AG04449 (cell line): ENCODE measurements at regions of chr12 and their contacts with region 1.

Region 1: GRCh38 chr12:106223485-106224354 is 24.1 kb downstream of the CKAP4 start:
- DNase-seq: no peak
- H3K4me3 ChIP-seq: no peak overlapping the region
- CTCF ChIP-seq: peak; percentile 93

Region 2: GRCh38 chr12:105420659-105421240 is 803.0 kb before region 1 on chr12:
- CTCF ChIA-PET with region 1: interaction called, 31 read pairs
- POLR2A ChIA-PET with region 1: no interaction called
- DNase-seq: peak; percentile 33
- H3K4me3 ChIP-seq: no peak overlapping the region
- CTCF ChIP-seq: peak; percentile 79

Region 3: DNA sequence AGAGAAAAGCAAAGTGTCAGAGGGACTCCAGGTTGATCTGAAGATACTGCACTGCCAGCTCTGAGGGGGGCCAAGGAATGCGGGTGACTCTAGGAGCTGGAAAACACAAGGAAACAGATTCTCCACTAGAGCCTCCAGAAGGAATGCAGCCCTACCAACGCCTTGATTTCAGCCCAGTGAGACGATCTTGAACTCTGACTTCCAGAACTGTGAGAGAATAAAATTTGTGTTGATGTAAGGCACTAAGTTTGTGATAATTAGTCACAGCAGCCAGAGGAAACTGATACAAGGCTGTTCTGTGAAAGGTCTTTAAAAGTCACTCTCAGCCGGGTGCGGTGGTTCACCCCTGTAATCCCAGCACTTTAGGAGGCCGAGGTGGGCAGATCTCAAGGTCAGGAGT is 10.1 kb before region 1 on chr12:
- CTCF ChIA-PET with region 1: interaction called, 37 read pairs
- POLR2A ChIA-PET with region 1: no interaction called
- DNase-seq: no peak
- H3K4me3 ChIP-seq: no peak overlapping the region
- CTCF ChIP-seq: no peak

Region 4: DNA sequence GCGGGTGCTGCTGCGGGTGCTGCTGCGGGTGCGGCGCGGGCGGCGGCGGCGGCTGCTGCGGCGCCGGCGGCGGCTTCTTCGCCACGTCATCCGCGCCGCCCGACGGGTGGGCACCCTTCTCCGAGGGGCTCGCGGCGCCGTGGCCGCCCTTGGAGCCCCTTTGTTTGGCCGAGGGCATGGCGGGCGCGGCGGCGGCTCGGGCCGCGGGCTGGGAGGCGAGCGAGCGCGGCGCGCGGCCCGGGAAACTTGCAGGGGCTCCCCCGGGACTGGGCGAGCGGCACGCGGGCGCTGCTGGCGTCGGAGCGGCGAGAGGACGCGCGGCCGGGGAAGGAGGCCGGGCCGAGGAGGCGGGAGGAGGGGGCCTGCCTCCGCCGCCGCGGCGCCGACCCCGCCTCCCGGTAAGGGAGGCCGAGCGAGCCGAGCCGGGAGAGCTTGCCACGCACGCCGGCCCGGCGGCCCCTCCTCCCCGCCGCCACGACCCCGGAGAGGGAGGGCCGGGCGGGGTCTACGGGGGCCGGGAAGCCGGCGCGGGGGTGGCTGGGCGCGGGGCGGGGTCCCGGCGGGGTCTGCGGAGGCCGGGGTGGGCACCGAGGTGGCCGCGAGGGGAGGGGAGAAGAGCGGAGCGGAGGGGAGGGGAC is 24.1 kb after region 1 on chr12 and contains the start of gene CKAP4:
- CTCF ChIA-PET with region 1: interaction called, 16 read pairs
- POLR2A ChIA-PET with region 1: interaction called, 3 read pairs
- DNase-seq: no peak
- H3K4me3 ChIP-seq: peak within 1 kb of the TSS; percentile 86
- CTCF ChIP-seq: no peak

Region 5: GRCh38 chr12:106309671-106310505 is 86.2 kb after region 1 on chr12:
- CTCF ChIA-PET with region 1: interaction called, 12 read pairs
- POLR2A ChIA-PET with region 1: no interaction called
- DNase-seq: peak; percentile 50
- H3K4me3 ChIP-seq: no peak overlapping the region
- CTCF ChIP-seq: no peak

Region 6: GRCh38 chr12:106357549-106358395 is 134.1 kb after region 1 on chr12 and contains the start of gene POLR3B:
- CTCF ChIA-PET with region 1: interaction called, 63 read pairs
- POLR2A ChIA-PET with region 1: interaction called, 5 read pairs
- DNase-seq: peak; percentile 69
- H3K4me3 ChIP-seq: peak within 1 kb of the TSS; percentile 97
- CTCF ChIP-seq: peak; percentile 90

Region 7: DNA sequence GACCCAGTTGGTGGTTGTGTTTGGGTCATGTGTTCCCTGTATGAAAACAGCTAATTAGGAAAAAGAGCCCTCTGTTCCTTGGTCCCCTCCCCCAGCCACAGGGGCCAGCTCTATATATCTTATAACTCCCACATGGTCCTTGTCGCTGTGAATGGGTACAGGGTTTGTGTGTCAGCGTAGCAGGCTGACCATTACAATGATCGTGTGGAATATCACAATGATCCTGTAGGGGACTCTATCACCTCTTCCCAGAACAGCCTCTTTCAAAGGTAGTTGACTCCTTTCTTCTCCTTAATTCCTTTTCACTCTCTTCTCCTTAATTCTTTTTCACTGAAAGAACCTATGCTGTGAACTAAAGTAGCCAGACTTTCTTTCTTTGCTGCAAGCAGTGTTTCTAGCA is 499.1 kb after region 1 on chr12:
- CTCF ChIA-PET with region 1: no interaction called
- POLR2A ChIA-PET with region 1: no interaction called
- DNase-seq: no peak
- H3K4me3 ChIP-seq: no peak overlapping the region
- CTCF ChIP-seq: no peak